Sciatic nerve (tissue), 2 donors: ENCODE measurements at regions of chr7 and their contacts with region 1.

Region 1: GRCh38 chr7:101671371-101672356 is 42.6 kb upstream of the MYL10 start:
- DNase-seq: no peak
- ATAC-seq: peak; percentile 55

Region 2: DNA sequence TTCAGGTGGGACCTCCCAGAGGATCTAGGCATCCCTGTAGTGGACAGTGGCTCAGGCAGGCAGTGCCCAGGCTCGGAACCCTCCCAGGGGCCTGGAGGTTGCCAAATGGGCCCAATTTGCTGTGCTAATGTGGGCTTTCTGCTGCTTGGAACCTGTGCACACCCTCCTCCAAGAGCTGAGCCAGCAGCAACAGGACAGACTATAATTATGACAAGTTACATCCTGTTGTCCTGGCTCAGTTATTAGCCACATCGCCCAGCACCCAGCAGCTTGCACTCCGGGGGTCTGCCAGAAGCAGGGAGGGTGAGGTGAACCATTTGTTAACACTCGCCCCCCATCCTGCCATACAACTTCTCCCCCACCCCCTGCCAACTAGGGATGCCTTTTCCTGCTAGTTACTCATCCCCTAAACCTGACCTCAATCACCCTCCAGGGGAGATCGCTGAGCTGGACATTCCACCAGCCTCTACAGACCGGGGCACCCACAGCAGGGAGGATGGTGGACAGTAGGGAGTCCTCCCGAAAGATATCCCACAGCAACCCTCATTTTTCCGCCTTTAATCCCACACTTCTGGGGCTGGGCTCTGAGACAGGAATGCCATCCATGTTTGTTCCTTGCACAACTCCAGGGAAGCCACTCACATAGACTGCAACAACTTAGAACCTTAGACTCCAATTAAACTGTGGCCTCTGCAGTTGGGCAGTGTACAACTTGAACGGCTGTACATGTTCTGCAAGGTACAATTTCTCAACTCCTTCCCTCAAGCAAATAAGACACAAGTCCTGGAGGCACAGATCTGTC is 34.6 kb before region 1 on chr7:
- intact Hi-C with region 1: loop called (anchors 1 kb)
- DNase-seq: no peak
- ATAC-seq: no peak

Region 3: DNA sequence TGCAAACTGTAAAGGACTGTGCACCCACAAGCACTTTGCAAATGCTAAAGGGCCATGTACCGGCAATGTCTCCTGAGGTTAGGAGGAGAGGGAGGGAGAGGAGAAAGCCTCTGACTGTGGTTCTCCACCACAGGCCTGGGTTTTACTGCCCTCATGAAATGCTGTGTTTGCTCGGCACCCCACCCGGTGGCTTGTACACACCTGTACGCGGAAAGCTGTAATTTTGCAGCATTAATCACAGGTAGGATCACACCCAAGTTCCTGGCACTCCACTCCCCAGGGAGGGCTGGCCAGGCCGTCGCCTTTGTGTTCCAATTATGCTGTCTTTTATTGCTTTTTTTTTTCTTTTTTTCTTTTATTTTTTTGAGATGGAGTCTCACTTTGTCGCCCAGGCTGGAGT is 35.9 kb after region 1 on chr7:
- intact Hi-C with region 1: no loop called
- DNase-seq: no peak
- ATAC-seq: no peak